Activated CD4-positive, alpha-beta T cell treated with anti-CD3 and anti-CD28 coated beads, Interleukin-2, amount 10 ng/mL, durations not matched to agents 24 days and 14 days (primary cell): ENCODE measurements at regions of chr11 and their contacts with region 1.

Region 1: GRCh38 chr11:64652586-64653387 is 61.8 kb downstream of the SLC22A12 start:
- DNase-seq: peak; percentile 93
- H3K4me3 Mint-ChIP-seq: no peak overlapping the region
- H3K27ac Mint-ChIP-seq: no peak overlapping the region
- H3K4me1 Mint-ChIP-seq: peaks cover 9% of the 10 kb centered on the region
- H3K27me3 Mint-ChIP-seq: peaks cover 3% of the 10 kb centered on the region

Region 2: DNA sequence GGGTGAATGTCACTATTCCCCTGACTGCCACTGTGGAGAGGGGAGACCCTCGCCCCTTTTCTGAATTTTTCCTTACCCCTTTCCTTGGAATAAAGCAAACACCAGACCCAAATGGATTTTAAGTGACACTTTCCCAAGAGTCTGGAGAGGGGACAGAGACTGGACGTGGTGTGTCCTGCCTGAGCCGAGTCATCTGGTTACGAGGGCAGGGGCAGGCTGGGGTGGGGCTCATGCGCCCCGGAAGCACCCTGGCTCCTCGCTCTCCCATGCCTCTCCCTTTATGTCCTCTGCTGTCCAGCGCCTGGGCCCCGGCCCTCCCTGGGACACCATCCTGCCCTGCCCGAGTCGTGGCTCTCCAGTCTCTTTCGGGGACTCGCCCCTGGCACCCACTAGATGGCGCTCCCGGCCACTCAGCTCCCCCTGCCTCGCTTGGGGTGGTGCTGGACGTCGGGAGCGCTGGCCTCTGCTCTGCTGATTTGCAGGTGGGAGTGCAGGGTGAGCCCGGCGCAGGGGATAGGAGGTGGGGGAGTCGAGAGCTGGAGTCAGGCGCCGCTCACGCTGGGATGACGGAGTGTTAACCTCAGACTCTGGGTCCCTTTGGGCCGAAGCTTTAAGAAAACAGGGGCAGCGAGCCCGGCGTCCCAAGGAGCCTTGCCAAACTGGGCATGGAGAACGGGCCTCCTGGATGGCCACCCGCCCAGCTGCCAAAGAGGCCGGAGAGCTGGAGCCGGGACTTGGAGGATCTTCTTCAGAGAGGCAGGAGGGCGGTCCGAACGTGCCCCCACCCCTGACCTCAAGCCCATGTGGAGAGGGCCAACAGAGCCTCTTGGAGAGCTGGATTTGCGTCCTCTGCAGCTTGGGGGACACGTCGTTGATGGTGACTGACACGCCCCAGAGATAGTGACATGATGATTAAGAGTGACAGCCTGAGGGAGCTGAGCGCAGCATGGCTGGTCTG is 203.9 kb before region 1 on chr11:
- intact Hi-C with region 1: loop called (anchors 2 kb)
- DNase-seq: peak; percentile 92
- H3K4me3 Mint-ChIP-seq: peak overlapping the region; percentile 85
- H3K27ac Mint-ChIP-seq: peak overlapping the region; percentile 5
- H3K4me1 Mint-ChIP-seq: peaks cover 16% of the 10 kb centered on the region
- H3K27me3 Mint-ChIP-seq: peaks cover 22% of the 10 kb centered on the region

Region 3: DNA sequence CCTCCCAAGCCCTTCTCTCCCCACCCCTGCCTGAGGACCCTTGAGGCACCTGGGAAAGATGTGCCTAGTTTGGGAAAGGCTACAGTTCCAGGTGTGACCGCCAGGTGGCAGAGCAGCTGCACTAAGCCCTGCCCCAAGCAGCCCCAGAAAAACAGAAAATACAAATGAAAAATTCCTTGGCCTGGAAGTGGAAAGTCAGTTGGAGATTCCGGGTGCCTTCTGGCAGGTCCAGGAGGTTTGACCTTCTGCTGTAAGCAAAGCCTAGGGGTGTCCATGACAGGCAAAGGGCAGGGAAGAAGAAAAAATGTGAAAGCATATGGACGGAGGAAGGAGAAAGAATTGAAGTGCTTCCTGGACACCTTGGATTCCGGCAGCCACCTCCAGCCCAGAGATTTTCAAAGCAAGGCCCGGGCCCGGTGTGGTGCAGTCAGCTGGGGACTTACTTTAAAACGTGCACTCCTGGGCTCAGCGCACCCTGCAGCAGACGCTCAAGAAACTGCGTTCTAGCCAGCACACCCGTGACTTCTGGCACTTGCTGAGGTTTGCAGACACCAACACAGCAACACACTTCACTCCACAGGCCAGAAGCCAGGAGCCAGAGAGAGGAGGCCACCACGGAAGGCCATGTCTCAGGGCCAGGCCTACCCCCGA is 99.1 kb before region 1 on chr11:
- intact Hi-C with region 1: loop called (anchors 1 kb)
- DNase-seq: peak; percentile 85
- H3K4me3 Mint-ChIP-seq: no peak overlapping the region
- H3K27ac Mint-ChIP-seq: no peak overlapping the region
- H3K4me1 Mint-ChIP-seq: no peaks in the 10 kb centered on the region
- H3K27me3 Mint-ChIP-seq: peaks cover 1% of the 10 kb centered on the region